Activated T-helper 1 cell treated with anti-CD3 and anti-CD28 coated beads, Interleukin-12 subunit alpha, Interleukin-12 subunit beta, Interleukin-2, Interleukin-4 antibody, amounts not matched to agents 30 ng/mL and 10 ng/mL and 1 ng/mL, durations not matched to agents 14 hours and 24 hours and 36 hours (primary cell): ENCODE measurements at regions of chr10 and their contacts with region 1.

Region 1: DNA sequence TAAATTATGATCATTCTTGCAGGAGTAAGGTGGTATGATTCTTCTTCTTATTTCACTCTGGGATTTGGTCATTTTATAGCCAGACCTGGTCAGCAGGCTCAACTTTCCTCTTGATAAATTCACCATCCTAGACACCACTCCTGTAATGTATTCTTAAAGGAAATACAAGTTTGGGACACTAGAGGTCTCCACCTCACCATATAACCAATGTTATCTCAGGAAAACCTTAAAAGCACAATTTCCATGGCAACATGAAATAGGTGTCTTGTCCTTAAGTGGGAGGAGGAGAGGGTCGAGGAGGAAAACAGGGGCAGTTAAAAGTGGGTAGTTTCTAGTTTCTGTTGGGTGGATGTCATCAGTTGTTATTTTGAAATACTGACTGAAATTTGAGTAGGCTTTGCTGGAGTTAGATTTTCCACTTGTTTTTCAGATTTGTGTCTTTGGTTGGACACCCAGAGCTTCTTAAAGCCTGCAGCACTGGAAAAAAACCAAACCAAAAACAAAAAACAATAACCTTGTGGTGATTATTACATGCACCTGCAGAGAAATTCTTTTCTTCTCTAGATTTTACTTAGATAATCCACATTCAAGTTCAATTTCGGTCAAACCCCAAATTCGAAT is 163.1 kb downstream of the PRKCQ start:
- DNase-seq: no peak
- H3K4me3 Mint-ChIP-seq: no peak overlapping the region
- H3K27ac Mint-ChIP-seq: no peak overlapping the region
- H3K4me1 Mint-ChIP-seq: peaks cover 8% of the 10 kb centered on the region
- H3K27me3 Mint-ChIP-seq: peaks cover 1% of the 10 kb centered on the region

Region 2: GRCh38 chr10:6445501-6446316 is 28.7 kb after region 1 on chr10:
- intact Hi-C with region 1: loop called (anchors 1 kb)
- DNase-seq: peak; percentile 30
- H3K4me3 Mint-ChIP-seq: no peak overlapping the region
- H3K27ac Mint-ChIP-seq: peak overlapping the region; percentile 36
- H3K4me1 Mint-ChIP-seq: peaks cover 34% of the 10 kb centered on the region
- H3K27me3 Mint-ChIP-seq: no peaks in the 10 kb centered on the region

Region 3: DNA sequence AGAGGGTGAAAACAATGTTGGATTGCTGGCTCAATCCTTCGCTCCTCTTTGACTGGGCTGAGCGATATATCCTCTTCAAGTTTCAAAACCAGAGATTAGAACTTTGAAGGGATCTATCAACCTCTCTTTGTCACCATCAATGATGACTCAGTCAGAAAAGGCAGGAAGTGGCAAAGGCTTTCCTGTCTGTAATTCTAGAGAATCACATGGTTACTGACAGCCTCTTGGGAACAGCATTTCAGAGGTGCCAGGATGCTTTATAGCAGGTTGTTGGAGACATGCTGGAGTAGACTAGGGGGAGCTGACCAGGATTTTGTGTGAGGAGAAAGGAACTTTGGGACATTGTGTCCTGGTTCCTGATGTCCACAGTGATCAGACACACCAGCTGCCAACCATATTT is 81.8 kb after region 1 on chr10:
- intact Hi-C with region 1: loop called (anchors 1 kb)
- DNase-seq: peak; percentile 63
- H3K4me3 Mint-ChIP-seq: peak overlapping the region; percentile 68
- H3K27ac Mint-ChIP-seq: peak overlapping the region; percentile 88
- H3K4me1 Mint-ChIP-seq: peaks cover 44% of the 10 kb centered on the region
- H3K27me3 Mint-ChIP-seq: no peaks in the 10 kb centered on the region

Region 4: DNA sequence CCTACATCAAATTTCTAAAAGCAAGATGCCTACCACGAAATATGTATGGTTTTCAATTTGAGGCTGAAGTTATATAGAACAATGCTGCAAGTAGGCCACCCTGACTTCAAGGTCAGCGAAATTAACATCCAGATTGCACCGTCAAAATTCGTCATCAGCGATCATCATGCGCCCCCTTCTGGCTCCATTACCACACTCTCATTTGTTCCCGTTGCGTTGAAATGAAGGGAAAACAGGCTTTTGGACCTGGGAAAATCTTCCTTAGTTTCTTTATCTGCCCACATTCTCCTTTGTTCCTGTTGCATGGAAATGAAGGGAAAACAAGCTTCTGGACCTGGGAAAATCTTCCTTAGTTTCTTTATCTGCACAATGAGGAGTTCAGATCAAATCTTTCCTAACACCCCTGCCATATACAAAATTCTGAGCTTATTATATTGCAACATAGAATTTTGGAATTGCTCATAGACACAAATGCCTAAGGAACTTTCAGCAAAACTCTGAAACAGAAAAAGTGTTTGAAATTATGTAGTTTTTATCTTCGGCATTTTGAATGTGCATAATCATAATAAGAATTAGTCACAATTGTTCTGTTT is 261.3 kb after region 1 on chr10:
- intact Hi-C with region 1: loop called (anchors 1 kb)
- DNase-seq: peak; percentile 31
- H3K4me3 Mint-ChIP-seq: no peak overlapping the region
- H3K27ac Mint-ChIP-seq: no peak overlapping the region
- H3K4me1 Mint-ChIP-seq: peaks cover 19% of the 10 kb centered on the region
- H3K27me3 Mint-ChIP-seq: peaks cover 38% of the 10 kb centered on the region

Region 5: GRCh38 chr10:7687228-7687907 is 1270.4 kb after region 1 on chr10:
- intact Hi-C with region 1: loop called (anchors 5 kb)
- DNase-seq: peak; percentile 66
- H3K4me3 Mint-ChIP-seq: no peak overlapping the region
- H3K27ac Mint-ChIP-seq: no peak overlapping the region
- H3K4me1 Mint-ChIP-seq: peaks cover 19% of the 10 kb centered on the region
- H3K27me3 Mint-ChIP-seq: peaks cover 28% of the 10 kb centered on the region